Common myeloid progenitor, CD34-positive (primary cell): ENCODE measurements at regions of chr1 and their contacts with region 1.

Region 1: DNA sequence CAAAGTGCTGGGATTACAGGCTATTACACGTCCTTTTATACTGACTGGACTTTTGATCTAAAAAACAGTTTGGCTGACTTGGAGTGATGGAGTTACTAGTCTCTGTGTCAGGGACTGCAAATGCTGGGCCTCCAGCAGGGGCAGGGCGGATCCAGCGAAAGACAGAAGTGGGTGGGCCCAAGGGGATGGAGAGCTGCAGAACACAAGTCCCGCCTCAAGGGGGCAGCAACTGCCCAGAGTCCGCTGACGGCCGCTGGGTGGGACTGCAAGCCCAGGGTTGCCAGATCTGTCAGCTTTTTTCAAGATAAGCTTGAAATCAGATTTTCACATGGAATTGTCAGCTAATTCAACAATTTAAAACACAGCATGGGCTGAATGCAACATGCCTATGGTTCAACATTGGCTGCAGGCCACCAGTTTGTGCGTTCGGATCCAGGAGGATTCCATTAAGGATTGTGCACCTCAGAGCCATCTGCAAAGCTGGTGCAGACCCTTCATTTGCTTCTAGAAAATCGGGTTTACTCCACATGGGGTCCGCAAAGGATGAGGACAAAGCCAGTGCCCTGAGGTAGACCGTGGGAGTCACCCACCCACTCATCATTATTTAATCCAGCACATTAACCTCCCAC is 10.7 kb downstream of the STMN1 start:
- DNase-seq: peak; percentile 91 to 97 (median 95)
- H3K4me3 ChIP-seq: no peak overlapping the region
- H3K27ac ChIP-seq: no peak overlapping the region
- H3K4me1 ChIP-seq: peaks cover 0 to 6% (median 1%) of the 10 kb centered on the region in 4 experiments
- H3K27me3 ChIP-seq: no peaks in the 10 kb centered on the region

Region 2: DNA sequence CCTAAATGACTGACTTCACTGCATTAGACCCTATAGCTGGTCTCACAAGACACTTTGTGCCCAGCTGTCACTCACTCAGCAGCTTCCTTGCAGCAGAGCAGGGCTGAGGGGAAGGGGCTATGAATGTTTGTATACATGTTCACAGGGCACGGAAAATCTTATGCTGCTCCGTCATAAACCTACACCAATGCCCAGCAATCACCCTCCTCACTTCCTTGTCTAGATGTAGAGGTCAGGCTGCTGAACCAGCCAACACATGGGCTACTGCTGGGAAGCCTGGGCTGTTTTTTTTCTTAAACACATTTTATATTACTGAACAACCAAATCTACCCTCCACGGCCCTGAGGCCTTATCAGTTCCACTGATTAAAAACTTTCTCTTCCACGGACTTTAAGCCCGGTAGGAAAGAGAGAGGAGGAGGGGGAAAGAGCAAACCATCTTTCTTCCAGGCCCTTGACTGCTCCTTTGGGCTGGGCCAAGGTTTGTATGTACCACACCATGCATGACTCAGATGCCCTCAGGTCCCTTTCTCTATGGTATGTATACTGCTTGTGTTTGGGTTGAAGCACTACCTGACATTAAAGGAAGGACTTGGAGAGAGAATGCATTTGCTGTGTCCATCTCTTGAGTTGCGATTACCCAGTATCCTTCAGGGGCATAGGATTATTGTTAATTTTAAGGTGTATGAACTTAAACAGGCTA is 63.0 kb before region 1 on chr1:
- CTCF ChIA-PET with region 1: interaction called, 12 read pairs
- POLR2A ChIA-PET with region 1: no interaction called
- DNase-seq: no peak
- H3K4me3 ChIP-seq: peak overlapping the region in 2 of 7 experiments; percentile 8 to 27
- H3K27ac ChIP-seq: peak overlapping the region in 1 of 2 experiments; percentile 20
- H3K4me1 ChIP-seq: peaks cover 15 to 32% (median 22%) of the 10 kb centered on the region in 4 experiments
- H3K27me3 ChIP-seq: no peaks in the 10 kb centered on the region

Region 3: GRCh38 chr1:25912076-25912831 is 16.8 kb after region 1 on chr1:
- CTCF ChIA-PET with region 1: interaction called, 10 read pairs
- POLR2A ChIA-PET with region 1: no interaction called
- DNase-seq: no peak
- H3K4me3 ChIP-seq: no peak overlapping the region
- H3K27ac ChIP-seq: no peak overlapping the region
- H3K4me1 ChIP-seq: no peaks in the 10 kb centered on the region
- H3K27me3 ChIP-seq: peaks cover 0 to 3% (median 0%) of the 10 kb centered on the region in 5 experiments

Region 4: DNA sequence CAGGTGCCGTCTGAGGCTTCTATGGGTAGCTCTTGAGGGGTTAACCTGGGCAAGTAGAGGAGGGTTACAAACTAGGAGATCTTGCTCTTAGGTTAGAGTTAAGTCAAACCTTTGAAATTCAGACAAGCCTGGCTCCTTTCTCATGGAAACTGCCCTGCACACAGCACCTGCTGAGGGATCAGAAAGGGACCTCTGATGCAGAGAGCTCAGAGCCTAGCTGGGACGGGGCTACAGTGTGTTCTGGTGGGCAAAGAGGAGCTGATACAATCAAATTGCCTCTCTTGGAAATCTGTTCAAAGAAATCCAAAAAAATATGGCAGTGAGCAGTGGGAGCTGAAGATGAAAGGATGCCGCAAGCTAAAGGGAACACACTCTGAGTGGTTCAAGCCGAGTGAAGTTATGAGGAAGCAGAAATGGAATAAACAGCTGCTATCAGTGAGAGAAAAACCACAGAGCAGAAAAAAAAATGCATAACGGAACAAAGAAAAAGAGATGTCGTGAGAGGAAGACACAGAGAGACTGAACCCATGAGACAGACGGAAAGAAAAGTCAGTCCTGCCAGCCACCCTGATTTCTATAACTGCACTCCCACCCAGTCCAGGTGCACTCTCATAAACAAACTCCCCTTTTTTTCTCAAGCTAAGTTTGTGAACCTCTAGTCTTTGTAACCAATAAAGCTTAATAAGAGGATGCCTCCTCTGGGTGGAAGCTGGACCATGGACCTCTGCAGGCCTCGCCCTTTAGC is 75.8 kb after region 1 on chr1:
- CTCF ChIA-PET with region 1: interaction called, 15 read pairs
- POLR2A ChIA-PET with region 1: no interaction called
- DNase-seq: peak; percentile 57 to 90 (median 90)
- H3K4me3 ChIP-seq: peak overlapping the region in 2 of 7 experiments; percentile 4 to 10
- H3K27ac ChIP-seq: peak overlapping the region; percentile 41 to 42
- H3K4me1 ChIP-seq: peaks cover 9 to 28% (median 19%) of the 10 kb centered on the region in 4 experiments
- H3K27me3 ChIP-seq: no peaks in the 10 kb centered on the region

Region 5: GRCh38 chr1:25997828-25998761 is 102.6 kb after region 1 on chr1 and contains the start of gene PAFAH2:
- CTCF ChIA-PET with region 1: interaction called, 368 read pairs
- POLR2A ChIA-PET with region 1: interaction called, 7 read pairs
- DNase-seq: peak; percentile 100
- H3K4me3 ChIP-seq: peak within 1 kb of the TSS; percentile 11 to 92 (median 72)
- H3K27ac ChIP-seq: peak within 1 kb of the TSS; percentile 71 to 92
- H3K4me1 ChIP-seq: peaks cover 0 to 27% (median 16%) of the 10 kb centered on the region in 4 experiments
- H3K27me3 ChIP-seq: no peaks in the 10 kb centered on the region